BJ (cell line): ENCODE measurements at regions of chr2 and their contacts with region 1.

Region 1: DNA sequence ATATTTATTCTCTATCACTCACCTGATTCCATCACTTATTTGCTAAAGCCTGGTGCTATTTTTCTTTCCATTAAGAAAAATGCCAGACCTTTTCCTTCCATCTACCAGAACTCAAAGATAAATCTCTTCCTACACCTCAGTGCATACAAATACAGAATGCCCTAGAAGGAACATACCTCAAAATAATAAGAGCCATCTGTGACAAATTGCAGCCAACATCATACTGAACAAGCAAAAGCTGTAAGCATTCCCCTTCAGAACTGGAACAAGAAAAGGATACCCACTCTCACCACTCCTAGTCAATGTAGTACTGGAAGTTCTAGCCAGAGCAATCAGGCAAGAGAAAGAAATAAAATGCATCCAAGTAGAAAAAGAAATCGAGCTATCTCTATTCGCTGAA is 315.9 kb upstream of the UBE2E3 start:
- DNase-seq: no peak
- H3K4me3 ChIP-seq: no peak overlapping the region
- H3K27me3 ChIP-seq: no peaks in the 10 kb centered on the region
- CTCF ChIP-seq: no peak

Region 2: DNA sequence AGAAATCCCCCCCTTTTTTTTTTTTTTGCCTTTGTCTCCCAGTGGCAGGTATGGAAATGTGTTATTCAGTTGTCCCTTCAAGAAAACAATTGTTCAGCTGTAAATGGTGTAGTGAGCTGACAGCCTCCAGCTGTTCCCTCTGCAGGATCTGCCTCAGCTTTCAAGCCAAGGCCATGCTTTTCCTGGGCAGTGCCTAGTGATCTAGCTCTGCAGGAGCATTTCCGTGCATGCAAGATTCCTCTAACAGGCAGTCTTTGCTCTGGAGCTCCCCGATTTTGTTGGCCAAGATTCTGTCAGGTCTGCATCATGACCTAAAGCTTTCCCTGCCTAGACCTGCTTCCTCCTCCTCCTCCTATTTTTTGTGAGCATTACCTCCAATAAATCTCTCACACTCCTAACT is 15.2 kb after region 1 on chr2:
- CTCF ChIA-PET with region 1: no interaction called
- POLR2A ChIA-PET with region 1: interaction called, 24 read pairs
- DNase-seq: no peak
- H3K4me3 ChIP-seq: no peak overlapping the region
- H3K27me3 ChIP-seq: no peaks in the 10 kb centered on the region
- CTCF ChIP-seq: no peak